ENCODE measurements at regions of chr6 and their contacts with region 1.

Region 1: GRCh38 chr6:80527552-80528052 is 421.1 kb downstream of the BCKDHB start:
- DNase-seq: peak; percentile 93
- ATAC-seq: peak; percentile 99
- H3K4me3 ChIP-seq: peak overlapping the region in 2 of 3 experiments; percentile 42 to 44; a peak in 3 of 6 replicates
- H3K27ac ChIP-seq: peak overlapping the region; percentile 88
- H3K4me1 ChIP-seq: peaks cover 38% of the 10 kb centered on the region
- H3K27me3 ChIP-seq: no peaks in the 10 kb centered on the region; a peak in 1 of 5 replicates
- CTCF ChIP-seq: no peak
- EP300 ChIP-seq: peak; percentile 89 to 94
- POLR2A ChIP-seq: no peak
- RAD21 ChIP-seq: no peak

Region 2: DNA sequence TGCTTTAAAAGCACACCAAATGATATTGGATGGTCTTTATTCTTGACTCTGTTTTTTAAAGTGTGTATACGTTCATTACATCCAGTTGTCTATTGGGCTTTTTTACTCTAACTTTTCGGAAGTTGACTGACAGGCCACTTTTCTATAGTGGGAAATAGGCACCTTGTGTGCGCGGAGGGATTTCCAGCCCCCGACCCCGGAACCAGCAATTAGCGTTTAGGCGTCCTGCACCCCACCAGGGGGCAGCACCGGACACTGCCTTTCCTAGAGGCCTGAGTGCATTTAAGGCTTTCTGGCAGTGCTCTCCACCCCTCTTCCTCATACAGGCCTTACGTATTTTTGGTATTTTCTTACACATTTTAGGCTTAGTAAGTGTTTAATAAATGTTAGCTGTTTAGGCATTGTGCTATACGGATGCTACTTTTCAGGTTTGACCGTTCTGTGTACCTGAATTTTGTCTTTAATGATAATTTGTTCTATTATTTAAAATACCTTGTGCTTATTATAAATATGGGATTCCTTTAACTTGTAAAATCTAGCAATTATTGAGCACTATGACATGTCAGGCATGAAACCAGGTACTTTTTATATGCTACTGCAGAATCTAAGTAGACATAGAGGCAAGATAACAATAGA is 189.3 kb before region 1 on chr6:
- CTCF ChIA-PET with region 1: no interaction called
- POLR2A ChIA-PET with region 1: no interaction called
- in situ Hi-C with region 1: no loop called
- intact Hi-C with region 1: loop called (anchors 2 kb)
- DNase-seq: peak; percentile 47
- ATAC-seq: peak; percentile 92
- H3K4me3 ChIP-seq: no peak overlapping the region
- H3K27ac ChIP-seq: no peak overlapping the region
- H3K4me1 ChIP-seq: no peaks in the 10 kb centered on the region
- H3K27me3 ChIP-seq: no peaks in the 10 kb centered on the region
- CTCF ChIP-seq: peak; percentile 83
- EP300 ChIP-seq: no peak
- POLR2A ChIP-seq: no peak
- RAD21 ChIP-seq: peak; percentile 61; the same call in 1 of the 2 replicates

Region 3: DNA sequence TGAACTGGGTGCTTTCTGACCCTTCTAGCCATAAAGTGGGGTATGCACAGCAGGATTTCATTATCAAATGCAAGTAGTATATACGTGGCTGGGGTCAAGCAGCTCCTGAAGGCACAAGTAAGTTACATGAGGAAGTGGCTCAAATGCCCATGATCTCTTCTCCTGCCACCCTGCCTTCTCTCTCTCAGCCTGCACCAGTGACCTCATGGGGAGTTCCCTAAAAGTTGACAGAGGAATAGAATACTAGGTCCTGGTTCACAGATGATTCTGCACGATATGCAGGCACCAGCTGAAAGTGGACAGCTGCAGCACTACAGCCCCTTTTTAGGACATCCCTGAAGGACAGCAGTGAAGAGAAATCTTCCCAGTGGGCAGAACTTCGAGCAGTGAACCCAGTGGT is 139.1 kb before region 1 on chr6:
- CTCF ChIA-PET with region 1: no interaction called
- POLR2A ChIA-PET with region 1: no interaction called
- in situ Hi-C with region 1: no loop called
- intact Hi-C with region 1: no loop called
- DNase-seq: no peak
- ATAC-seq: no peak
- H3K4me3 ChIP-seq: no peak overlapping the region
- H3K27ac ChIP-seq: no peak overlapping the region
- H3K4me1 ChIP-seq: no peaks in the 10 kb centered on the region
- H3K27me3 ChIP-seq: no peaks in the 10 kb centered on the region
- CTCF ChIP-seq: no peak
- EP300 ChIP-seq: no peak
- POLR2A ChIP-seq: no peak
- RAD21 ChIP-seq: no peak

Region 4: DNA sequence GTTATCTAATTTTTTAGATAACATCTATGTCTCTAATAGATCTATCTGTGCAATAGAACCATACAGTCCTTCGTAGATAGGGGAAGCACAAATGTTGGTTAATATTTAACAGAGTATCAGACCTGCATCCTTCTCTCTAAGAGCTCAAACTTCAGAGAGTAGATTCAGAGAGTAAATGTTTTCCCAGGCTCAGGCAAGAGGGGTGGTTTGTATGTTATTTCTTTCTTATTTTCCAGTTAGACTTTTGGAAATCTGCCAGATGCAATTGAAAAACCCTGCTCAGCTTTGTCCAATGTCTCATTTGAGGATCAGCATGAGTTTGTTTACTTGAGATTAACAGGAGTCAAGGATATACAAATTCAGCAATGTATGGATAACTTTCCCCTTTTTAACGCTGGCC is 59.2 kb before region 1 on chr6:
- CTCF ChIA-PET with region 1: no interaction called
- POLR2A ChIA-PET with region 1: no interaction called
- in situ Hi-C with region 1: no loop called
- intact Hi-C with region 1: loop called (anchors 1 kb)
- DNase-seq: peak; percentile 86
- ATAC-seq: peak; percentile 100
- H3K4me3 ChIP-seq: peak overlapping the region in 1 of 3 experiments; percentile 11; a peak in 1 of 6 replicates
- H3K27ac ChIP-seq: no peak overlapping the region
- H3K4me1 ChIP-seq: peaks cover 20% of the 10 kb centered on the region
- H3K27me3 ChIP-seq: no peaks in the 10 kb centered on the region
- CTCF ChIP-seq: no peak
- EP300 ChIP-seq: peak in 1 of 2 experiments; percentile 35; a peak in 1 of 4 replicates
- POLR2A ChIP-seq: no peak
- RAD21 ChIP-seq: no peak

Region 5: GRCh38 chr6:80508885-80509630 is 18.5 kb before region 1 on chr6:
- CTCF ChIA-PET with region 1: no interaction called
- POLR2A ChIA-PET with region 1: no interaction called
- in situ Hi-C with region 1: no loop called
- intact Hi-C with region 1: loop called (anchors 2 kb)
- DNase-seq: peak; percentile 76
- ATAC-seq: peak; percentile 98
- H3K4me3 ChIP-seq: no peak overlapping the region
- H3K27ac ChIP-seq: peak overlapping the region; percentile 21
- H3K4me1 ChIP-seq: peaks cover 45% of the 10 kb centered on the region
- H3K27me3 ChIP-seq: no peaks in the 10 kb centered on the region
- CTCF ChIP-seq: no peak
- EP300 ChIP-seq: peak in 1 of 2 experiments; percentile 85; a peak in 3 of 4 replicates
- POLR2A ChIP-seq: no peak
- RAD21 ChIP-seq: no peak